WTC11 (cell line): ENCODE measurements at regions of chr10 and their contacts with region 1.

Region 1: DNA sequence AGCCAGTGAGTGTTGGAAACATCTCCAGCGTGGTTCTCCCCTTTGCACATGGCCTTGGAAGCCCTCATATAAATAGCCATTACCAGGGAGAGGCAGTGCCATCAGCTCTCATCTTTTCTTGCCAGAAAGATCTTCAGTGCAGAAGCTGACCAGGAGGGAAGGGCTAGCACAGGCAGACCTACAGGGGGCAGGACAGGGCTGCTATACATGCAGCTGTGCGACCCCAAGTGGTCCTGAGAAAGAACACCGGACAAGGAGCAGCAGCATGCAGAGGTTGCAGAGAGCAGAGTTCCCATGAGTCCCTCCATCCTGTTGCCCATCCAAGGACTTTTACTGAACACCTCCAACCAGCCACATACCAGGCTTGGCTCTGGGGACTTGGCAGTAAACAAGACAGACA is 17.1 kb downstream of the GRID1 start:
- DNase-seq: peak; percentile 73
- ATAC-seq: peak; percentile 96
- H3K4me3 Mint-ChIP-seq: no peak overlapping the region
- H3K27ac Mint-ChIP-seq: no peak overlapping the region
- H3K4me1 Mint-ChIP-seq: no peaks in the 10 kb centered on the region; the same call in 1 of the 2 replicates
- H3K27me3 Mint-ChIP-seq: no peaks in the 10 kb centered on the region
- CTCF ChIP-seq: peak; percentile 46

Region 2: DNA sequence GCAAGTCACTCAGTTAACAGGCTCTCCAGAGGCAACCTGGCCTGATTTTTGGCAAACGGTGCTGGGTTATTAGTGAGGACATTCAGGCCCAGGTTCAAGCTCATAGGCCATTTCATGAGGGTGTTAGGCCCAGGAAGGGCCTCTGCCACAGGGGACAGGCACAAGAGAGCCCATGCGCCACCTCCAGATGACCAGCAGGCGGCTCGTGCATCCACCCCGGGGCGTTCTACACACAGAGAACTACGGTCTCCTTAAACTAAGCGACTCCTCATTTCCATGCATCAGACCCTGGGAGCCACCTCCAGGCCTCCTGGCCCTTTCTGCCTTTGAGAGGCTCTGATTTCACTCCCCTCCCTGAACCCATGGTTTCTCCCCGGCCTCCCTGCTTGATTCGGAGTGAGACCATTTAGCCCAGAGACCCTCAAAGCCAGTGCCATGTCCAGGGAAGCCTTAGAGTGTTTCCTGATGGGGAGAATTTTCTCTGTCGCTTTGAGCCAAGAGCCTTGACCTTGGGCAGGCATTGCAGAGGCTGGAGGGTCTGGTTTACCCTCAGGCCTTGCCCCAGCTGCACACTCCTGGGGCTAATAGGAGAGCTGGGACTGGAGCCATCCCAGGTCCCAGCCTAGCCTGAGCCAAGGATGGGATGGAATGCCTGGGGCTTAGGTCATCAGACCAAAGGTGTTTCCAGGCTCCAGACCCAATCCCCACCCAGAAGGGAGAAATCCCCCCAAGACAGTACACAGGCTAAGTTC is 170.9 kb before region 1 on chr10:
- CTCF ChIA-PET with region 1: interaction called, 14 read pairs
- POLR2A ChIA-PET with region 1: no interaction called
- DNase-seq: peak; percentile 82
- ATAC-seq: peak; percentile 99
- H3K4me3 Mint-ChIP-seq: no peak overlapping the region
- H3K27ac Mint-ChIP-seq: no peak overlapping the region
- H3K4me1 Mint-ChIP-seq: no peaks in the 10 kb centered on the region
- H3K27me3 Mint-ChIP-seq: no peaks in the 10 kb centered on the region
- CTCF ChIP-seq: peak; percentile 64

Region 3: GRCh38 chr10:86261941-86262687 is 87.4 kb before region 1 on chr10:
- CTCF ChIA-PET with region 1: interaction called, 37 read pairs
- POLR2A ChIA-PET with region 1: no interaction called
- DNase-seq: peak; percentile 66
- ATAC-seq: peak; percentile 89
- H3K4me3 Mint-ChIP-seq: no peak overlapping the region
- H3K27ac Mint-ChIP-seq: no peak overlapping the region
- H3K4me1 Mint-ChIP-seq: peaks cover 20% of the 10 kb centered on the region
- H3K27me3 Mint-ChIP-seq: peaks cover 4% of the 10 kb centered on the region; the same call in 1 of the 2 replicates
- CTCF ChIP-seq: no peak

Region 4: GRCh38 chr10:86298501-86299001 is 50.9 kb before region 1 on chr10:
- CTCF ChIA-PET with region 1: interaction called, 10 read pairs
- POLR2A ChIA-PET with region 1: no interaction called
- DNase-seq: no peak
- ATAC-seq: peak; percentile 71
- H3K4me3 Mint-ChIP-seq: no peak overlapping the region
- H3K27ac Mint-ChIP-seq: no peak overlapping the region
- H3K4me1 Mint-ChIP-seq: peaks cover 15% of the 10 kb centered on the region
- H3K27me3 Mint-ChIP-seq: peaks cover 3% of the 10 kb centered on the region; the same call in 1 of the 2 replicates
- CTCF ChIP-seq: no peak

Region 5: GRCh38 chr10:86389441-86390193 is 40.1 kb after region 1 on chr10:
- CTCF ChIA-PET with region 1: interaction called, 19 read pairs
- POLR2A ChIA-PET with region 1: no interaction called
- DNase-seq: peak; percentile 93
- ATAC-seq: peak; percentile 96
- H3K4me3 Mint-ChIP-seq: peak overlapping the region; percentile 72
- H3K27ac Mint-ChIP-seq: peak overlapping the region; percentile 60; the same call in 1 of the 2 replicates
- H3K4me1 Mint-ChIP-seq: peaks cover 24% of the 10 kb centered on the region
- H3K27me3 Mint-ChIP-seq: peaks cover 52% of the 10 kb centered on the region
- CTCF ChIP-seq: no peak

Region 6: GRCh38 chr10:86556568-86557276 is 207.2 kb after region 1 on chr10:
- CTCF ChIA-PET with region 1: no interaction called
- POLR2A ChIA-PET with region 1: no interaction called
- DNase-seq: no peak
- ATAC-seq: peak; percentile 63
- H3K4me3 Mint-ChIP-seq: no peak overlapping the region
- H3K27ac Mint-ChIP-seq: no peak overlapping the region
- H3K4me1 Mint-ChIP-seq: peaks cover 14% of the 10 kb centered on the region
- H3K27me3 Mint-ChIP-seq: no peaks in the 10 kb centered on the region; the same call in none of the 2 replicates
- CTCF ChIP-seq: no peak

Region 7: DNA sequence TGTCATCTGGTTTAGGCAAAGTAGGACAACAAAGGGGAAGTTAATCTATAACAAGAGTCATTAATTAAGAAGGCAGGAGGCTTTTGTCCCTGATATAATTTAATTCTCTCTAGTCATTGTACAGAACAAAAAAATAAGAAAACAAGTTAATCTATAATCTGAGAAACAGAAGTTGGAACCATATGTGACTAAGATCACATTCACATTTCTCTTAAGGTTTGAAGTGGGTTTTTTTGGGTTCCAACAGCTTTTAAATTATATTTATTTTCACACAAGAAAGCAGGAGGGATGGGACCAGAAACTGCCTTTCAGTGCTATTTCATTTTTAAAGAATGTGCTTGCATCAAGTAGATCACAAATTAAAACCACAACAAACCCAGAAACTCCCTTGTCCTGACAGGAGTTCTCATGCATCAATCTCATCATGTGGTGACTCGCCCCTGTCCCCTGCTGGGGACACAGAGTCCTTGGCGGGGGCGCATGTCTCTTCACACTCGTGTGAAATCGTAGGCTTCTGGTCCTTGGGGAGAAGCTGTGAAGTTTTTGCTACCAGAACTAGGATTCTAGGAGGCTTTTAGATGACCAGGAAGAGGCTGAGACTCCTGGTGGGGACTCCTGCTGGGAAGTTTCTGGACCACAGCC is 294.8 kb after region 1 on chr10:
- CTCF ChIA-PET with region 1: no interaction called
- POLR2A ChIA-PET with region 1: no interaction called
- DNase-seq: no peak
- ATAC-seq: peak; percentile 73
- H3K4me3 Mint-ChIP-seq: no peak overlapping the region
- H3K27ac Mint-ChIP-seq: no peak overlapping the region
- H3K4me1 Mint-ChIP-seq: peaks cover 6% of the 10 kb centered on the region
- H3K27me3 Mint-ChIP-seq: no peaks in the 10 kb centered on the region
- CTCF ChIP-seq: no peak